ENCODE measurements at regions of chr15 and their contacts with region 1.

Region 1: GRCh38 chr15:77966540-77967290 is 110.8 kb downstream of the TBC1D2B start:
- DNase-seq: no peak
- H3K4me3 ChIP-seq: no peak overlapping the region
- H3K27ac ChIP-seq: no peak overlapping the region
- H3K4me1 ChIP-seq: no peaks in the 10 kb centered on the region
- H3K27me3 ChIP-seq: no peaks in the 10 kb centered on the region
- CTCF ChIP-seq: peak; percentile 50 to 88 (median 82)
- POLR2A ChIP-seq: no peak

Region 2: GRCh38 chr15:77179541-77179998 is 787.1 kb before region 1 on chr15:
- intact Hi-C with region 1: no loop called
- DNase-seq: no peak
- H3K4me3 ChIP-seq: no peak overlapping the region
- H3K27ac ChIP-seq: peak overlapping the region; percentile 13 to 86 (median 73)
- H3K4me1 ChIP-seq: peaks cover 11 to 74% (median 53%) of the 10 kb centered on the region in 6 donors
- H3K27me3 ChIP-seq: no peaks in the 10 kb centered on the region
- CTCF ChIP-seq: no peak
- POLR2A ChIP-seq: no peak

Region 3: GRCh38 chr15:78087951-78088772 is 121.4 kb after region 1 on chr15:
- intact Hi-C with region 1: no loop called
- DNase-seq: no peak
- H3K4me3 ChIP-seq: no peak overlapping the region
- H3K27ac ChIP-seq: peak overlapping the region in 3 of 8 donors; percentile 13 to 27 (median 19)
- H3K4me1 ChIP-seq: peaks cover 7 to 60% (median 39%) of the 10 kb centered on the region in 6 donors
- H3K27me3 ChIP-seq: no peaks in the 10 kb centered on the region
- CTCF ChIP-seq: no peak
- POLR2A ChIP-seq: no peak

Region 4: DNA sequence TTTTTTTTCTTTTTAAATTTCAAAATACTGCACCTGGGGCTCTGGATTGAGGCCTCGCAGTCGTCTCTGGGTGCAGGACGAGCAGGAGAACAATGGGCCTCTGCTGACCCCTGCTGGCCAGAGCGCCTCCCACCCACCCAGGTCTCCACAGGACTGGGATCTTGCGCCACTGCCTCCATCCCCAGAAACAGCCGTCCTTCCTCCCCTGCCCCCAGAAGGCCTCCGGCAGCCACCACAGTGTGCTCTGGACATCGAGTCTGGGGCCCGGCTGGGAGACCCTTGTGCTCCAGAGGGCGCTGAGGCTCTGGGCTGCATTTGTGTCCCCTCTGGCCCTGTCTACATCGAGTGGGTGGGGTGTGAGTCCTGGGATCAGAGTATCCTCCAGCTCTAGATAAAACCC is 274.3 kb after region 1 on chr15:
- intact Hi-C with region 1: loop called (anchors 5 kb)
- DNase-seq: peak; percentile 94
- H3K4me3 ChIP-seq: no peak overlapping the region
- H3K27ac ChIP-seq: no peak overlapping the region
- H3K4me1 ChIP-seq: peaks cover 0 to 15% (median 2%) of the 10 kb centered on the region in 6 donors
- H3K27me3 ChIP-seq: peaks cover 0 to 13% (median 0%) of the 10 kb centered on the region in 7 donors
- CTCF ChIP-seq: peak; percentile 60 to 95 (median 88)
- POLR2A ChIP-seq: no peak

Region 5: GRCh38 chr15:78284758-78285157 is 318.0 kb after region 1 on chr15:
- intact Hi-C with region 1: no loop called
- DNase-seq: no peak
- H3K4me3 ChIP-seq: no peak overlapping the region
- H3K27ac ChIP-seq: no peak overlapping the region
- H3K4me1 ChIP-seq: no peaks in the 10 kb centered on the region
- H3K27me3 ChIP-seq: no peaks in the 10 kb centered on the region
- CTCF ChIP-seq: no peak
- POLR2A ChIP-seq: no peak